ENCODE measurements at regions of chr10 and their contacts with region 1.

Region 1: GRCh38 chr10:31620226-31621151 is 301.5 kb downstream of the ZEB1 start:
- DNase-seq: peak; percentile 59 to 80
- ATAC-seq: peak; percentile 31 to 49
- H3K4me3 ChIP-seq: no peak overlapping the region
- H3K27ac ChIP-seq: peak overlapping the region; percentile 42 to 69 (median 59)
- H3K4me1 ChIP-seq: peaks cover 30 to 35% of the 10 kb centered on the region in 2 donors
- H3K27me3 ChIP-seq: no peaks in the 10 kb centered on the region
- CTCF ChIP-seq: peak; percentile 22 to 45 (median 35)
- POLR2A ChIP-seq: no peak

Region 2: GRCh38 chr10:31650010-31650409 is 29.5 kb after region 1 on chr10:
- in situ Hi-C with region 1: no loop called
- intact Hi-C with region 1: loop called (anchors 1 kb)
- DNase-seq: peak; percentile 81 to 84
- ATAC-seq: peak; percentile 98 to 99
- H3K4me3 ChIP-seq: peak overlapping the region; percentile 37 to 45 (median 39)
- H3K27ac ChIP-seq: peak overlapping the region; percentile 71 to 79 (median 72)
- H3K4me1 ChIP-seq: peaks cover 6 to 12% of the 10 kb centered on the region in 2 donors
- H3K27me3 ChIP-seq: no peaks in the 10 kb centered on the region
- CTCF ChIP-seq: no peak
- POLR2A ChIP-seq: no peak

Region 3: GRCh38 chr10:31677195-31678138 is 57.0 kb after region 1 on chr10:
- in situ Hi-C with region 1: no loop called
- intact Hi-C with region 1: loop called (anchors 5 kb)
- DNase-seq: peak in 1 of 2 donors; percentile 28
- ATAC-seq: peak; percentile 56 to 74
- H3K4me3 ChIP-seq: peak overlapping the region in 3 of 4 donors; percentile 12 to 26 (median 24)
- H3K27ac ChIP-seq: peak overlapping the region; percentile 65 to 73 (median 70)
- H3K4me1 ChIP-seq: peaks cover 17 to 24% of the 10 kb centered on the region in 2 donors
- H3K27me3 ChIP-seq: no peaks in the 10 kb centered on the region
- CTCF ChIP-seq: no peak
- POLR2A ChIP-seq: no peak

Region 4: GRCh38 chr10:31697271-31698180 is 77.0 kb after region 1 on chr10:
- in situ Hi-C with region 1: no loop called
- intact Hi-C with region 1: loop called (anchors 5 kb)
- DNase-seq: peak; percentile 64 to 77
- ATAC-seq: peak; percentile 63 to 70
- H3K4me3 ChIP-seq: peak overlapping the region; percentile 10 to 45 (median 22)
- H3K27ac ChIP-seq: peak overlapping the region; percentile 78 to 85 (median 82)
- H3K4me1 ChIP-seq: peaks cover 40 to 51% of the 10 kb centered on the region in 2 donors
- H3K27me3 ChIP-seq: no peaks in the 10 kb centered on the region
- CTCF ChIP-seq: no peak
- POLR2A ChIP-seq: peak in 1 of 2 donors; percentile 20